ENCODE measurements at regions of chr2 and their contacts with region 1.

Region 1: DNA sequence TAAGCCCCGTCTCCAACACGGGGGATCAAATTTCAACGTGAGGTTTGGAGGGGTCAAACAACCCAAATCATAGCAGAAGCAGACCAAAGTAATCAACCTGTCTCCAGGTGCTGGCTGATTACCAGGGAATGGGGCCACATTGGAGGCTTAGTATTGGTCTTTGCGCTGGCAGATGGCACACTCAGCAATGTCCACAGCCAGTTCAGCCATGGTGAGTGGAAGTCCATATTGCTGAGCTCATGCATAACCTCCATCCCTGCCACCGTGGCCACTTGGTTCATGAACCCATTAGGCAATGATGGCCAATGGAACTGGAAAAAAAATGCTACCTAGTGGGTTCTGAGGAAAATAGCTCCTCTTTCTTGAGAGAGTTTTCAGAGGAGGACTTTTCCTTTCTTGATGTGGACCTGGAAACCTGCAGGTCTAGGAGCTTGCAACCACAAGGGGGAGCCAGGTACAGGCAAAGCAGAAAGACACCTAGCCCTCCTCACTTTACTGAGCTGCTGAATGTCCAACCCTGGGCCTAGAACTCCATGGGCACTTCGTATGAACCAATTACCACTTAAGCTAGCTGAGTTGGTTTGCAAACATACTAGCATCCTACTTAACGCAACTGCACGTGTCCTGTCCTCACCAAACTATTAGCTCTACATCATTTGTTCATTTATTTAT is 128.0 kb upstream of the GYPC start:
- DNase-seq: peak; percentile 40 to 54
- H3K4me3 ChIP-seq: no peak overlapping the region
- H3K27ac ChIP-seq: no peak overlapping the region
- H3K4me1 ChIP-seq: no peaks in the 10 kb centered on the region
- H3K27me3 ChIP-seq: no peaks in the 10 kb centered on the region
- CTCF ChIP-seq: peak in 3 of 6 experiments; percentile 26 to 39 (median 31)
- POLR2A ChIP-seq: no peak

Region 2: DNA sequence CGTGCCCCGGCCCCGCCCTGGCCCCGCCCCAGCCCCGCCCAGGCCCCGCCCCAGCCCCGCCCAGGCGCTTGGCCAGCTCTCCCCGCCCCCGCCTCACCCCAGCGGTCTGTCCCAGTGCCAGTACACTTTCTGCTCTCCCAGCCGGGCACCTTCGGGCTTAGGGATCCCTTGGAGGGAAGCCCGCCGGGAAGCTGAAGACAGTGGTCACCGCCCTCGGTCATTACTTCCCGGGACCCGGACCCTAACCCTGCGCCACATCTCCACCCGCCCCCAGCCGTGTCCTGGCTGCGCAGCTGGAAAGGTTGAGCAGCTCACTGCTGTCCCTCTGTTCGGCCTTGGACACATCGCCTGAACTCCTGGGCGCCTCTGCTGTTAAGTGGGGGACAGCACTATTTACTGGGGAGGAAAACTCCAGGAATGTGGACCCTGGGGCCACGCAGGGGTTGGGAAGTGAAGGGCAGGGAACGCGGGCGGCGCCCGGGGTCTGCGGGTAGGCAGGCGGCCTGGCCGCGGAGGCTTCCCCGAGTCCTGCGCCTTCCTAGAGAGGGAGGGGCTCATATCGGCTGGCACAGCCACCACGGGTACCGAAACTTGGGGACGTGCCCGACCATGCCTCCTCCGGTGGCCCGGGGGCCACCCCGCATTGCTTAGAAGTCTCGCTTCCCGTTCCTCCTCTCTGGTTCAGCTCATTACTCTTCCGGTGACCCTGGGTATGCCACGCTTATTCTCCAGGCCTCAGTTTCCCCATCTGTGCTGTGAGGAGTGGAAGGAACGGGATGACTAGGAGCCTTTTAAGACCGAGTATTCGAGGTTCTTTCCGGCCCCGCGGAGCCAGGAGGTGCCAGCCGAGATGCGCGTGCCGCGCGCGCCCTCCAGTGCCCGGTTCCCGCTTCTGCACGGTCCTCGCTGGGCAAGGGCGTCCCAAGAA is 249.0 kb after region 1 on chr2:
- intact Hi-C with region 1: loop called (anchors 10 kb)
- DNase-seq: peak; percentile 73 to 81
- H3K4me3 ChIP-seq: peak overlapping the region in 2 of 3 donors; percentile 39 to 53
- H3K27ac ChIP-seq: peak overlapping the region in 1 of 3 donors; percentile 43
- H3K4me1 ChIP-seq: peaks cover 3 to 5% of the 10 kb centered on the region in 2 donors
- H3K27me3 ChIP-seq: no peaks in the 10 kb centered on the region
- CTCF ChIP-seq: peak; percentile 67 to 95 (median 74)
- POLR2A ChIP-seq: no peak